Esophagus squamous epithelium (tissue), 5 donors: ENCODE measurements at regions of chr19 and their contacts with region 1.

Region 1: GRCh38 chr19:49937750-49938381 is 8.6 kb upstream of the NUP62 start:
- DNase-seq: no peak
- H3K4me3 ChIP-seq: peak overlapping the region in 2 of 4 donors; percentile 16 to 52
- H3K27ac ChIP-seq: no peak overlapping the region
- H3K4me1 ChIP-seq: peaks cover 4 to 9% (median 7%) of the 10 kb centered on the region in 3 donors
- H3K27me3 ChIP-seq: peaks cover 0 to 4% (median 0%) of the 10 kb centered on the region in 4 donors
- CTCF ChIP-seq: peak; percentile 90 to 98 (median 96)
- POLR2A ChIP-seq: no peak

Region 2: DNA sequence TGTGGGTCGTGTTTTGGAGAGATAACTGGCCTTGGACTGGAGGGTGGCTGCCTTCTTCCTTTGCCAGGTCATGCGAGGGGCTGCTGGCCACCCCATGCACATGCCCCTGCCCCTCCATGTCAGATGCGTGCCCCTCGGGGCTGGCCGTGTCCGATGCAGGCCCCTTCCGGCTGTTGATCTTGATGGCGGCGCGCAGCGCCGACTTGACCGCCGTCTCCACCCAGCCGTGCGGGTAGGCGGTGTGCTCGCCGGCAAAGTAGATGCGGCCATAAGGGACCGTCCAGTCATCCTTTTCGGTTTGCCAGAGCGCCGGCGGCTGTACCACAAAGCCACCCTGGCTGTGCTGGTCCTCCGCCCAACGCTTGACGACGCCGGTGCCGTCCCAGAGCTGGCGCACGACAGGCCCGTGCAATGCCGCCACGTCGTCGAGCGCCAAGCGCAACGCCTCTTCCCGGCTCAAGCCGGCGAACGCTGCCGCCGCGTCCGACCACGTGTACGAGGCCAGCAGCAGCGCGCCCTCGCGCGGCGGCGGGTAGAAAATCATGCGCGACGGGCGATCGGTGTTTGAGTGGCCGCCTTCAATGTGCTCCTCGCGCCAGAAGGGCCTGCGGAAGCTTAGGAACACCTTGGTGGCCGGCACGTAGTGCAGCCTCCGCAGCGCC is 48.0 kb before region 1 on chr19:
- intact Hi-C with region 1: no loop called
- DNase-seq: no peak
- H3K4me3 ChIP-seq: peak overlapping the region; percentile 7 to 61 (median 38)
- H3K27ac ChIP-seq: peak overlapping the region in 1 of 4 donors; percentile 27
- H3K4me1 ChIP-seq: peaks cover 10 to 31% (median 11%) of the 10 kb centered on the region in 3 donors
- H3K27me3 ChIP-seq: peaks cover 0 to 21% (median 0%) of the 10 kb centered on the region in 4 donors
- CTCF ChIP-seq: peak; percentile 68 to 84 (median 74)
- POLR2A ChIP-seq: no peak

Region 3: DNA sequence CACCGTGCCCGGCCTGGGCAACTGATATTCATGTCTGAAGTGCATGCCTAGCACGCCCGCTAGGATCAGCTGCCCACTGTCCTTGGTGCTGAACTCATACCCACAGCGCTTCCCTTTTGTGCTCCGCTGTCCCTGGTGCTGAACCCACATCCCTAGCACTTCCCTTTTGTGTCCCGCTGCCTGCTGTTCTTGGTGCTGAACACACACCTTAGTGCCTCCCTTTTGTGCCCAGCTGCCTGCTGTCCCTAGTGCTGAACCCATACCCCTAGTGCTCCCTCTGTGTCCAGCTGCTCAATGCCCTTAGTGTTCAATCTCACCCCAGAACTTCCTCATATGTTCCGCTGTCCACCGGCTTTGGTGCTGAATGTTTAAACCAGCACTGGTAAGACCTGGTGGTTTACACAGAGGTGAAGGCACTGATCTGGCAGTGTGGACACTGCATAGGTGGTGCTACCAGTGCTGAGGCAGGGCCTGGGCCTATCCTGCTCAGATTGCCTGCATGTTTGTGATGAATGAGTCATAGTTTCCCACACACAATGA is 49.4 kb after region 1 on chr19:
- intact Hi-C with region 1: loop called (anchors 5 kb)
- DNase-seq: peak; percentile 33
- H3K4me3 ChIP-seq: no peak overlapping the region
- H3K27ac ChIP-seq: no peak overlapping the region
- H3K4me1 ChIP-seq: no peaks in the 10 kb centered on the region
- H3K27me3 ChIP-seq: no peaks in the 10 kb centered on the region
- CTCF ChIP-seq: no peak
- POLR2A ChIP-seq: no peak

Region 4: DNA sequence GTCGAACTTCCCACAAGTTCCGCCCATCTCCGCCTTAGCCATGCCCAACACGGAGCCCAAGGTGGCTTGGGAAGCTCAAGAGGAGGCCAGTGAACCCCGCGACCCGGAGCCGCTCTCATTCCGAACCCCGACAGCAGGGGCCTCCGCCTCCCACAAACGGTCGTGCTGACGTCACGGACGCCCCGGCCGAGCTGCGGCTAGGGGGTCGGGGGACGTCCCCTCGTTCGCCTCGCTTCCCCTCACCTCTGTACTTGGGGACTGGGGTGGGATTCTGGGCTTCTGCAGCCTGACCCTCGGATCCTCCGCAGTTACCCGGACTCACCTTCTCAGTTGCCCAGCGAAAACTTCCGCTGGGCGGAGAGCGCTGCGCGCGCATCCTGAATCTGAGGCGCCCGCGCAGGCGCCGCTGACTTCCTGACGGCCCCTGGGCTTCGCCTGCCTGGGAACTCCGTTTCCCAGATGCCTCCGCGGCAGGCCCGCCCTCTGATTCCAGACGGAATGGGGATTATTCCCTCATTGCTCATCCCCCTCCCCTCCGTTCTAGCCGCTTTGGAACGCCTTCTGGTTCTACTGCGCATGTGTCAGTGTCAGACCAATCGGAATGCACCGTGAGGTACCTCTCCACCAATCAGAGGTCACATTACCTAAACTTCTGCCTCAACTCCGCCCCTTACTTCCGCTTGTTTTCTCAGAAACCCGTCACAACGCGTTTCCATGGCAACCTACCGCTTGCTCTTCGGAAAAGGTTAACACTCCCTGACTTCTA is 87.3 kb after region 1 on chr19 and contains the start of gene VRK3:
- intact Hi-C with region 1: no loop called
- DNase-seq: peak; percentile 94
- H3K4me3 ChIP-seq: peak within 1 kb of the TSS; percentile 77 to 96 (median 92)
- H3K27ac ChIP-seq: peak within 1 kb of the TSS; percentile 95 to 97 (median 97)
- H3K4me1 ChIP-seq: peaks cover 17 to 50% (median 29%) of the 10 kb centered on the region in 3 donors
- H3K27me3 ChIP-seq: no peaks in the 10 kb centered on the region
- CTCF ChIP-seq: peak in 4 of 6 experiments; percentile 12 to 44 (median 21)
- POLR2A ChIP-seq: peak in 3 of 4 donors; percentile 57 to 82 (median 72)
- total RNA-seq, gene VRK3: 12.7 to 26.1 (median 20.9) TPM

Region 5: DNA sequence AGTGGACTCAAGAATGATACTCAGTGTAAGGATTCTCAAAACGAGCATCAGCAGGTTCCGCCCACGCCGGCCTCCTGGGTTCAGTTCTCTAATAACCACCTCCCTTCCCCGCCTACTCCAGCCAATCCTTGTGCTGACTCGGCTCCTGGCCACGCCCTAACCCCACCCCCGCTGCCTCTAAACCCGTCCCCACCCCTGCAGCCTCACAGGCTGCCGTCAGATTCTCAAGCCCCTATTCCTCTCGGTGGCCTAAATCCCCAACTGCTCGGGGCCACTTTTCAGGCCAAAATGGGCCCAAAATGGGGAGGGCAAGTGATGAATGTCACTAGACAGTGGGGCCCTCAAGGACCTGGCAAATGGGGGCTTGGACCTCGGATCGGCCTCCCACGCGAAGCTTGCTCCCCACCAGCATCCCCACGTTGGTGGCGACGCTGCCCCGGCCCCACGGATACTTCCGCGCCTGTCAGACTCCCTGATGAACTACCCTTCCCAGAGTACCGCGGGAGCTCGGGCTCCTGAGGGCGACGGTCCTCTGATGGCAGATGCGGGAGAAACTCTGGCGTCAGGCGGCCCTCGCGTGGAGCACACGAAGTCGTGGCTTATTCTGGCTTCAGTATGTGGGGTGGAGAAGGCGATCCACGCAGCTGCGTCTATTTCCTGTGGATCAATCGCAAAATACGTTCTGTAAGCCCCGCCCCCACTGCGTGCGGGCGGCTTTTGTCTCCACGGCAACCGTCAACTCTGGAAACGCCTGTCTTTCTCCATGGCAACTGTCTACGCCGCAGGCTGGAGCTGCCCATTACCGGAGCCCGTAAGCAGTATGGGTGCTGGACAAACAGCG is 112.7 kb after region 1 on chr19:
- intact Hi-C with region 1: no loop called
- DNase-seq: peak; percentile 11
- H3K4me3 ChIP-seq: peak overlapping the region; percentile 22 to 69 (median 48)
- H3K27ac ChIP-seq: peak overlapping the region in 3 of 4 donors; percentile 46 to 80 (median 79)
- H3K4me1 ChIP-seq: peaks cover 4 to 19% (median 12%) of the 10 kb centered on the region in 3 donors
- H3K27me3 ChIP-seq: no peaks in the 10 kb centered on the region
- CTCF ChIP-seq: no peak
- POLR2A ChIP-seq: no peak